ENCODE measurements at regions of chr21 and their contacts with region 1.

Region 1: DNA sequence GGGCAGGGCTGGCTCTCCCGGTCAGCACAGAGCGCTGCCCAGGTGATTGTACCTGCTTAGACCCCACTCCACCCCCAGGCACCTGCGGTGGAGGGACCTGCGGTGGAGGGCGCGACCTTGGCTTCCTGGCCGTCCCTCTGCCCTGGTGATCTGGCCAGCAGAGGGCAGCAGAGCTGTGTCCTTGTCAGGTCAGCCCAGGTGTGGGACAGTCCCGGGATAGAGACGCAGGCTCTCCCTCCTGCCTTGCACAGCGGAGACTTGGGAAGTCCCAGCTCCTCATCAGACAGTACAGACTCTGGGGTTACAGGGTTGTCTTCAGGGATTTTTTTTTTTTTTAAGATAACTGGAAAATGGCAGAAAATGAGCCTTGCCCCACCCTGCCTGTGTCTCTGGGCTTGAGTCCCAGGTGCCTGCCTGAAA is 10.0 kb downstream of the SLX9 start:
- DNase-seq: peak; percentile 76
- ATAC-seq: peak; percentile 86
- H3K4me3 ChIP-seq: no peak overlapping the region
- H3K27ac ChIP-seq: no peak overlapping the region
- H3K4me1 ChIP-seq: no peaks in the 10 kb centered on the region
- H3K27me3 ChIP-seq: no peaks in the 10 kb centered on the region
- CTCF ChIP-seq: peak; percentile 80
- POLR2A ChIP-seq: no peak
- RAD21 ChIP-seq: peak; percentile 91

Region 2: DNA sequence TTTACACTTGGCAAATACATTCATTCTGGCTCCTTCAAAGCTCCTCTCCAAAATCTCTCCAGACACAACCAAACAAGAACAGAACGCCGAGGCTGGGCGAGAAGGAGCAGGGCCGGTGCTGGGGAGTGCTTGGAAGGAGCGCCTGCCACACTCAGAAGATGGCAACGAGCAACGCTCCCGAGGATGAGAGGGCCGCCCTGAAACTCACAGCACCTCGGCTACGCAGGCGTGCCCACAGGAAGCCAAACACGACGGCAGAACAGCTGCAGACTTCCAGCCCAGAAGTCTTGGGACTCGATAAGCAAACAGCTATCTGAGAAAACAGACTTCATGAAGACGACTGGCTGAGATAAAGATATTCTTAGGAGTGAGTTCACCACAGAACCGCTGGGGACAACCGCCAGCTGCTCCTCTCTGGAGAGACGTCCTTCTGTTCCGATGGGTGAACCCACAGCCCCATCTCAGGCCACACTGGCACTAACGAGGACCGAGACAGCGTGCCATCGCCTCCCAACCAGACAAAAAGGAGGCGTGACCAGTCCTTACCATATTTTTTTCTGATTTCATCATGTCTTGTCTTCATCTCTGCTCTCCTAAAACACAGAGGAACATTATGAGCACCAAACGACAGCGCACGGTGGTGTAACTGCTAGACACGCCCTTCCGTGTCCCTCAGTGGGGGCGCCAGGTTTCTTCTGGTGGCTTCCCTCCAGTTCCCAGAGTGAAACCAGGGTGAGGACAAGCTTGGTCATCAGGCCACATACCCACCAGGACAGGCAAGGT is 94.9 kb before region 1 on chr21:
- CTCF ChIA-PET with region 1: no interaction called
- POLR2A ChIA-PET with region 1: no interaction called
- dilution Hi-C with region 1: no loop called
- in situ Hi-C with region 1: no loop called
- intact Hi-C with region 1: no loop called
- DNase-seq: no peak
- ATAC-seq: no peak
- H3K4me3 ChIP-seq: no peak overlapping the region
- H3K27ac ChIP-seq: no peak overlapping the region
- H3K4me1 ChIP-seq: no peaks in the 10 kb centered on the region
- H3K27me3 ChIP-seq: no peaks in the 10 kb centered on the region
- CTCF ChIP-seq: no peak
- POLR2A ChIP-seq: no peak
- RAD21 ChIP-seq: no peak

Region 3: GRCh38 chr21:45130324-45130774 is 180.6 kb after region 1 on chr21:
- CTCF ChIA-PET with region 1: interaction called, 27 read pairs
- POLR2A ChIA-PET with region 1: no interaction called
- dilution Hi-C with region 1: no loop called
- in situ Hi-C with region 1: loop called (anchors 5 kb)
- intact Hi-C with region 1: loop called (anchors 2 kb)
- DNase-seq: peak; percentile 84
- ATAC-seq: peak; percentile 82
- H3K4me3 ChIP-seq: peak overlapping the region; percentile 31
- H3K27ac ChIP-seq: peak overlapping the region; percentile 56
- H3K4me1 ChIP-seq: peaks cover 24% of the 10 kb centered on the region
- H3K27me3 ChIP-seq: no peaks in the 10 kb centered on the region
- CTCF ChIP-seq: no peak
- POLR2A ChIP-seq: no peak
- RAD21 ChIP-seq: no peak